Activated CD4-positive, alpha-beta T cell treated with anti-CD3 and anti-CD28 coated beads for 36 hours (primary cell): ENCODE measurements at regions of chr20 and their contacts with region 1.

Region 1: DNA sequence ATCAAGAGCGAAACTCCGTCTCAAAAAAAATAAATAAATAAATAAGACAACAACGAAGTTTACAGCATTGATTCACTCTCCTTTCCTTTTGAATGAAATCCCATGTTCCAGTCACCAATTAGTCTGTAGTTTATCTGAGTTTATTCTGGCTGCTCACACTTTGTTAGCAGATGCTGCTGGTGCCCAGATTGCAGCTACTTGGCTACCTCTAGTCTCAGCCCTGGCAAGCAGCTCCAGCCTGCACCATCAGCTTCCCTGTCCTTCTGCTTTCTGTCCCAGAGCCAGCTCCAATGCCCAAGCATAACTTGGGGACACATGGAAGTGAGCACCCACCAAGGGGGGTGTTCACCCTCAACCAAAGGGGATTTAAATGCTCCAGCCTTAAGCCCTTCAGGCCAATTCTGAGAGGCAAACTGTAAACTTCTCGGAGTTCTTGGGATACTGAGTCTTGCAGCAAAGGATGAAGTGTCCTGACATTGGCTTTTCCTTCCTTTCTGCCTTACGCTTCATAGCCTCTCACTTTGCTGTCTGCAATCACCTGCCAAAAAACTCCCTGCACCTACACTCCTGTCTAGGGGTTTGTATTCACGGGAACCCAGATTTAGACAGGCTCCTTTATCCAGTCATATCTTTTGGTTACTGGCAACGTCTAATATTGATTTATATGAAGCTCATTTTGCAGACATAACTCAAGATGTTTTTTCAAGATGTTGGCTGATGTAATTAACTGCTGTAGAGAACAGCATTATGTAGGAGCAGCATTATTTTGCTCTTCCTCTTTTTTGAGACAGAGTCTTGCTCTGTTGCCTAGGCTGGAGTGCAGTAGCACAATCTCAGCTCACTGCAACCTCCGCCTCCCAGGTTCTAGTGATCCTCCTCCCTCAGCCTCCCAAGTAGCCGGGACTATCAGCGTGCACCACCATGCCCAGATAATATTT is 9.8 kb upstream of the TASP1 start:
- DNase-seq: no peak
- ATAC-seq: no peak
- H3K4me3 Mint-ChIP-seq: no peak overlapping the region
- H3K27ac Mint-ChIP-seq: no peak overlapping the region
- H3K4me1 Mint-ChIP-seq: no peaks in the 10 kb centered on the region
- H3K27me3 Mint-ChIP-seq: peaks cover 11% of the 10 kb centered on the region

Region 2: GRCh38 chr20:13669299-13669698 is 20.7 kb after region 1 on chr20:
- CTCF ChIA-PET with region 1: interaction called, 4 read pairs
- POLR2A ChIA-PET with region 1: no interaction called
- intact Hi-C with region 1: loop called in 1 of 2 experiments (anchors 2 kb)
- DNase-seq: no peak
- ATAC-seq: no peak
- H3K4me3 Mint-ChIP-seq: no peak overlapping the region
- H3K27ac Mint-ChIP-seq: no peak overlapping the region
- H3K4me1 Mint-ChIP-seq: no peaks in the 10 kb centered on the region
- H3K27me3 Mint-ChIP-seq: peaks cover 8% of the 10 kb centered on the region

Region 3: DNA sequence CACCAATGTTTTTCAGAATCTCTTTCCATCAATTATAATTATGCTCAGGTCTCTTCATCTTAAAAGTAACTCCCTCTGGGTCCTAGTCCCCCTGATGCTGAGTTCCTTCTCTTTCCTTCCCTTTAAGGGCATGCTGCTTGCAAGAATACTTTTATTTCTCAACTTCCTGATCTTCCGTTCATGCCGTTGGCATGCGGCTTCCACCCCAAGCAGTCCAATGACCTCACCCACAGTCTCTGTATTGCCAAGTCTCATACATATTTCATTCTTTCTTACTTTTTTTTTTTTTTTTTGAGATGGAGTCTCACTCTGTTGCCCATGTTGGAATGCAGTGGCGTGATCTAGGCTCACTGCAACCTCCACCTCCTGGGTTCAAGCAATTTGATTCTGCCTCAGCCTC is 219.8 kb after region 1 on chr20:
- CTCF ChIA-PET with region 1: no interaction called
- POLR2A ChIA-PET with region 1: no interaction called
- intact Hi-C with region 1: no loop called
- DNase-seq: no peak
- ATAC-seq: no peak
- H3K4me3 Mint-ChIP-seq: no peak overlapping the region
- H3K27ac Mint-ChIP-seq: no peak overlapping the region
- H3K4me1 Mint-ChIP-seq: no peaks in the 10 kb centered on the region
- H3K27me3 Mint-ChIP-seq: peaks cover 7% of the 10 kb centered on the region